Activated naive CD4-positive, alpha-beta T cell treated with anti-CD3 and anti-CD28 coated beads for 36 hours (primary cell): ENCODE measurements at regions of chr9 and their contacts with region 1.

Region 1: GRCh38 chr9:88388172-88388885 is at the start of gene SPIN1:
- DNase-seq: peak; percentile 78
- H3K4me3 Mint-ChIP-seq: peak within 1 kb of the TSS; percentile 85
- H3K27ac Mint-ChIP-seq: peak within 1 kb of the TSS; percentile 91
- H3K4me1 Mint-ChIP-seq: peaks cover 31% of the 10 kb centered on the region
- H3K27me3 Mint-ChIP-seq: no peaks in the 10 kb centered on the region
- total RNA-seq, gene SPIN1: 20.2 to 21.4 TPM

Region 2: DNA sequence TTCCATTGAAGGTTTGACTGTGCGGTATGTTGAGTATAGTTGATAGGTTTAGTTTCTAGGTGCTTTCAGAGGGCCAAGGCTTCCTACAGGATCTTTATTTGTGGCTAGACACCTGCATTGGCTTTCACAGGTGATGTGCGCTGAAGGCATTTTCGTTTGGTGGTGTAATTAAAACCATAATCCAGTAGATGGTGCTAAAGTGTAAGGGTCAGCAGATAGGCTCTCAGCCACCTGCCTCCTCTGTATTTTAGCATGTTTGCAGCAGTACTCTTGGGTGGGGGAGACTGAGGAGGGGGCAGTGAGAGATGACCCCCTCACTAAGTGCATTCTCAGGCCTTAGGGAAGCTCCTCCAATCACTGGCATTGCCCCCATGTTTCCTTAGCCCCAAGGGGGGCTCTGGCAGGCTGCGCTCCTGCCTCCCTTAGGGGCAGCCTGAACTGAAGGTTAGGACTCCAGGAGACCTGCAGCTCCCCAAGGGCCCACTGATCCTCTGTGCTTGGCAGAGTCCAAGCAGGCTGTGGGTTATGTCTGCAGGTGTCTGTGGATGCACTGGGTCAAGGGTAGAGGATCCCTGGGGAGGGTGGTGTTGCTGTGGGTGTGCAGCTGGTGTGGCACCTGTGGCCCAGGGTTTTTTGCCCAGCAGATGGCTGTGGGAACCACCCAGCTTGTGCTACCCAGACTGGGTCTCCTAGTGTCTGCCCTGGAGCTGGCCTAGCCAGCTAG is 437.4 kb before region 1 on chr9:
- CTCF ChIA-PET with region 1: no interaction called
- intact Hi-C with region 1: loop called (anchors 5 kb)
- DNase-seq: no peak
- H3K4me3 Mint-ChIP-seq: no peak overlapping the region
- H3K27ac Mint-ChIP-seq: no peak overlapping the region
- H3K4me1 Mint-ChIP-seq: no peaks in the 10 kb centered on the region
- H3K27me3 Mint-ChIP-seq: peaks cover 32% of the 10 kb centered on the region

Region 3: GRCh38 chr9:88106491-88106890 is 281.8 kb before region 1 on chr9:
- CTCF ChIA-PET with region 1: no interaction called
- intact Hi-C with region 1: loop called (anchors 5 kb)
- DNase-seq: peak; percentile 34
- H3K4me3 Mint-ChIP-seq: no peak overlapping the region
- H3K27ac Mint-ChIP-seq: no peak overlapping the region
- H3K4me1 Mint-ChIP-seq: no peaks in the 10 kb centered on the region
- H3K27me3 Mint-ChIP-seq: peaks cover 28% of the 10 kb centered on the region

Region 4: DNA sequence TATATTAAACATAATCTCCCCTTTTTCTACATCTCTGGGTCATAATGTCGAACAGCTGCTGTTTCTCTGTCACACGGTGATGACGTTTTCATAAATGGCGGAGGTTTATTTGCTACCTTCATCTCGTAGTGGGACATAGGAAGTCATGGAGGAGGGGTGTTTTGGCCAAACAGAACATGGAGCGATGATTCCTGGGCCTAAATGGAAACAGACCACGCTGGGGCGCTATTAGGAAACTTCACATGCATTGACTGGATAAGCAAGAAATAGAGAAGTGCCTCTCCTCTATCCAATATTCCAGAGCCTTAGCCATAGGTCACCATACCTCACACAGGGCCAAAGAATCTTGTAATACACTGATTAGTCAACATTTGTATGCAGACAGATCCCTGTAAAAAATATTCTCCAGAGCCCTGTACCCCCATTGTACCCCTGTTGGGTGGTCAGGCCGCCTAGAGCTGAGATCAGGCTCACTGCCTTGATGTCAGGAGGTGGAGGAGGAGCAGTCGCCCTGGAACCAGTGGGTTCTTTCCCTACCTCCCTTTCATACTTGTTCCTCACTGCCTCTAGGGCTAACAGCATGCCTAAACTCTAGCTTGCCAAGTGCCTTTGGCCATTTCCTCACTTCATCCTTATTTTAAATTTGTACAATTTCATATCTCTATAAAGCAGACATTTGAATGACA is 77.9 kb before region 1 on chr9:
- CTCF ChIA-PET with region 1: no interaction called
- intact Hi-C with region 1: loop called (anchors 2 kb)
- DNase-seq: no peak
- H3K4me3 Mint-ChIP-seq: no peak overlapping the region
- H3K27ac Mint-ChIP-seq: no peak overlapping the region
- H3K4me1 Mint-ChIP-seq: peaks cover 26% of the 10 kb centered on the region
- H3K27me3 Mint-ChIP-seq: no peaks in the 10 kb centered on the region

Region 5: GRCh38 chr9:88578121-88579054 is 190.1 kb after region 1 on chr9:
- CTCF ChIA-PET with region 1: no interaction called
- intact Hi-C with region 1: loop called (anchors 5 kb)
- DNase-seq: peak; percentile 75
- H3K4me3 Mint-ChIP-seq: no peak overlapping the region
- H3K27ac Mint-ChIP-seq: no peak overlapping the region
- H3K4me1 Mint-ChIP-seq: peaks cover 4% of the 10 kb centered on the region
- H3K27me3 Mint-ChIP-seq: peaks cover 8% of the 10 kb centered on the region

Region 6: DNA sequence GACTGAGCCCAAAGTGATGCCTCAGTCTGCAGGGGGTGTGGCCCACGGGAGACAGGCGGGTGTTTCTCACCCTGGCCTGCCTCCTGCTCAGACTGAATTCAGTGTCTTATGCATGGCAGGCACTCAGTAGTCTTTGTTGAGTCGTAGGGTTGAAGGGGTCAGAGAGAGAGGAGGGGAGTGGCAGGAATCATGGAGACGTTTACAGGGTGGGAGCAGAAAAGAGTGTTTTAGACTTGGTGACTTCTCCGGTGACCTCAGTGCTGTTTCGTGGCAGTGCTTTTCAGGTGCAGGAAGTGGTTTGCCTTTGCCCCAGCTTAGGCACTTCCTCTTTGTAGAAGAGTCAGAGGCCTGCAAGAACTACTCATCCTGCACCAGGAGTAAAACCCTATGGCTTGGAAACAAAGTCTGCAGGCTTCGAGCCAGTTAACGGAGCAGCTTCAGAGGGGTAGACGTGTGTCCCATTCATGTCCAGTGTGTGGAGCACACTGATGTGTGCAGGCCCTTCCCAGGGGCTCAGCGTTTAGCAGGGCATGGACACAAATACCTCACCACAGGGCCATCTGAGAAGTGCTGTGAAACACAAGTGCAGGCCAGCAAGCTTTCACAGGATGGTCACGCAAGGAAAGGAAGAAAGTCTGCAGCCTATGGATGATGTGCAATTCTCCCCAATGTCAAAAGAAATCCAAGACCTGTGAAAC is 1134.1 kb after region 1 on chr9:
- CTCF ChIA-PET with region 1: no interaction called
- intact Hi-C with region 1: loop called (anchors 5 kb)
- DNase-seq: peak; percentile 89
- H3K4me3 Mint-ChIP-seq: peak overlapping the region; percentile 58
- H3K27ac Mint-ChIP-seq: peak overlapping the region; percentile 96
- H3K4me1 Mint-ChIP-seq: peaks cover 93% of the 10 kb centered on the region
- H3K27me3 Mint-ChIP-seq: no peaks in the 10 kb centered on the region